Sigmoid colon (tissue), 7 donors: ENCODE measurements at regions of chr4 and their contacts with region 1.

Region 1: GRCh38 chr4:156968479-156968984 is 3.1 kb downstream of the PDGFC start:
- DNase-seq: peak; percentile 82
- H3K4me3 ChIP-seq: peak overlapping the region; percentile 4 to 90 (median 87)
- H3K27ac ChIP-seq: peak overlapping the region; percentile 90 to 94 (median 92)
- H3K4me1 ChIP-seq: peaks cover 0 to 48% (median 30%) of the 10 kb centered on the region in 4 donors
- H3K27me3 ChIP-seq: no peaks in the 10 kb centered on the region
- CTCF ChIP-seq: peak; percentile 56 to 85 (median 79)
- EP300 ChIP-seq: no peak
- POLR2A ChIP-seq: no peak

Region 2: GRCh38 chr4:156169011-156169410 is 799.5 kb before region 1 on chr4:
- intact Hi-C with region 1: loop called (anchors 10 kb)
- DNase-seq: peak; percentile 61
- H3K4me3 ChIP-seq: no peak overlapping the region
- H3K27ac ChIP-seq: peak overlapping the region in 1 of 4 donors; percentile 16
- H3K4me1 ChIP-seq: peaks cover 0 to 12% (median 4%) of the 10 kb centered on the region in 4 donors
- H3K27me3 ChIP-seq: no peaks in the 10 kb centered on the region
- CTCF ChIP-seq: peak in 1 of 4 experiments; percentile 39
- EP300 ChIP-seq: no peak
- POLR2A ChIP-seq: no peak

Region 3: GRCh38 chr4:156475322-156475721 is 493.2 kb before region 1 on chr4:
- intact Hi-C with region 1: loop called (anchors 2 kb)
- DNase-seq: no peak
- H3K4me3 ChIP-seq: no peak overlapping the region
- H3K27ac ChIP-seq: no peak overlapping the region
- H3K4me1 ChIP-seq: no peaks in the 10 kb centered on the region
- H3K27me3 ChIP-seq: no peaks in the 10 kb centered on the region
- CTCF ChIP-seq: peak in 2 of 4 experiments; percentile 18 to 33
- EP300 ChIP-seq: no peak
- POLR2A ChIP-seq: no peak

Region 4: DNA sequence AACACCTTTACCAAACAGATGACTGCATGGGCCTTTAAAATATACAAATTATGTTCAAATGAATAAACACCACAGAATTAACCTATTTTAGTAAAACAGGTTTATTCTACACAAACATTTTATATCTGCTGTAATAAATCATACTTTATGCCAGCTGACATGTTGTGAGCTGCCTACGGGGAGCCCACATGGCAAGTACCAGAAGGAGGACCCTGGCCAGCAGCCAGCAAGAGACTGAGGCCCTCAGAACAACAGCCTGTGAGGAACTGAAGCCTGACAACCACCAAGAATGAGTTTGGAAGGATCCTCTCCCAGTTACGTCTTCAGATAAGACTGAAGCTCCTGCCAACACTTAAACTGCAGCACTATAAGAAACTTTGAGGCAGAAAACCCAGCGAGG is 373.9 kb before region 1 on chr4:
- intact Hi-C with region 1: loop called (anchors 5 kb)
- DNase-seq: peak; percentile 71
- H3K4me3 ChIP-seq: no peak overlapping the region
- H3K27ac ChIP-seq: no peak overlapping the region
- H3K4me1 ChIP-seq: peaks cover 0 to 6% (median 3%) of the 10 kb centered on the region in 4 donors
- H3K27me3 ChIP-seq: no peaks in the 10 kb centered on the region
- CTCF ChIP-seq: no peak
- EP300 ChIP-seq: no peak
- POLR2A ChIP-seq: no peak

Region 5: GRCh38 chr4:156771171-156771837 is 197.2 kb before region 1 on chr4:
- intact Hi-C with region 1: loop called (anchors 5 kb)
- DNase-seq: no peak
- H3K4me3 ChIP-seq: peak overlapping the region; percentile 2 to 29 (median 17)
- H3K27ac ChIP-seq: peak overlapping the region; percentile 50 to 74 (median 55)
- H3K4me1 ChIP-seq: peaks cover 0 to 76% (median 38%) of the 10 kb centered on the region in 4 donors
- H3K27me3 ChIP-seq: no peaks in the 10 kb centered on the region
- CTCF ChIP-seq: no peak
- EP300 ChIP-seq: no peak
- POLR2A ChIP-seq: no peak

Region 6: DNA sequence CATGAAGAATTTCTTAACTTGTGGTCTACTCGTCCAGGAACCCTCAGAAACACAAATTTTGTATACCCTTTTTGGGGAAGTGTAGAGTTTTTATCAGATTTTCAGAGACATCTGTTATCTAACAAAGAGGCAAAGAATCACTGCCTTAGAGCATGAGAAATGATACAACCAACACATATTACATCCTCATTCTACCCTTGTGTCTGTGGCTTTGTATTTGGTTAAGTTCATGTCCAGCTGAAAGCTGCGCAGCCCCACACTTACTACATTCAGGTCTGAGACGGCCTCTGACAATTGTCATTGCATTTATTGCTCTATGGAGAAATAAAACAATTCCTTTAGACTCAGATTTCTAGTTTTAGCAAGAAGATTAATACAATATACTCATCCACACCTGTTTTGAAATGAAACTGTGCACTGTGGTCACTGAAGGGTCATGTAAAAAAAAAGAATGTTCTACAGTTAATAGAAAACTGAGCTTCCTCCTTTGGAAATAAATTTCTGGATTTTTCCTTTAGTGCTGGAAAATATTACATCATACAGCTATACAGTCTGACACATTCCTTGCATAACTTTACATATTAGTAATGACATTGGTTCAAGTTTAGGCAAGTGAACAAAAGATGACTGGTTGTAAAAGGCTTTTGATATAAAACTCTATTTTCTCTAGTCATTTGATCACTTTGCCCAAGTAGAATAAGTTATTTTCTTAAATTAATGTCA is 147.2 kb after region 1 on chr4:
- intact Hi-C with region 1: no loop called
- DNase-seq: no peak
- H3K4me3 ChIP-seq: no peak overlapping the region
- H3K27ac ChIP-seq: no peak overlapping the region
- H3K4me1 ChIP-seq: peaks cover 0 to 10% (median 0%) of the 10 kb centered on the region in 4 donors
- H3K27me3 ChIP-seq: no peaks in the 10 kb centered on the region
- CTCF ChIP-seq: no peak
- EP300 ChIP-seq: no peak
- POLR2A ChIP-seq: no peak

Region 7: DNA sequence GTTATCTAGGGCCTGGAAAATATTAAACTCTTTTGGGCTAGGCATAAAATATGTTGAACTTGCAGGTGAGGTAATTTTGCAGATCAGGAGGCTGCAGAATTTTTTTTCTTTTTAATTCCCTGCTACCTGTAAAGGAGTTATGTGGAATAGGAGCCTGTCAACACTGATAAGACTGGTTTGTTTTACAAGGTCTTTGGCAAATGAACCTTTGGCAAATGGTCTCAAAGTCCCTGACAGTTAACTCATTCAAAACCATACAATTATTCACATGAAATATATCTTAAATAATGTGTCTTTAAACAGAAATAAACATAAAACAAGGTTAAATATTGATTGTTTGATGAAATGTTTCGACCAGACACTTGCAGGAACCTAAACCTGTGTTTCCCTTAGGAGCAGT is 864.1 kb after region 1 on chr4:
- intact Hi-C with region 1: no loop called
- DNase-seq: no peak
- H3K4me3 ChIP-seq: no peak overlapping the region
- H3K27ac ChIP-seq: no peak overlapping the region
- H3K4me1 ChIP-seq: no peaks in the 10 kb centered on the region
- H3K27me3 ChIP-seq: no peaks in the 10 kb centered on the region
- CTCF ChIP-seq: no peak
- EP300 ChIP-seq: no peak
- POLR2A ChIP-seq: no peak

Region 8: GRCh38 chr4:158161551-158162354 is 1193.2 kb after region 1 on chr4:
- intact Hi-C with region 1: loop called (anchors 10 kb)
- DNase-seq: peak; percentile 75
- H3K4me3 ChIP-seq: no peak overlapping the region
- H3K27ac ChIP-seq: peak overlapping the region; percentile 60 to 92 (median 72)
- H3K4me1 ChIP-seq: peaks cover 5 to 98% (median 88%) of the 10 kb centered on the region in 4 donors
- H3K27me3 ChIP-seq: no peaks in the 10 kb centered on the region
- CTCF ChIP-seq: no peak
- EP300 ChIP-seq: peak in 2 of 4 donors; percentile 7 to 54
- POLR2A ChIP-seq: no peak